ENCODE measurements at regions of chr11 and their contacts with region 1.

Region 1: DNA sequence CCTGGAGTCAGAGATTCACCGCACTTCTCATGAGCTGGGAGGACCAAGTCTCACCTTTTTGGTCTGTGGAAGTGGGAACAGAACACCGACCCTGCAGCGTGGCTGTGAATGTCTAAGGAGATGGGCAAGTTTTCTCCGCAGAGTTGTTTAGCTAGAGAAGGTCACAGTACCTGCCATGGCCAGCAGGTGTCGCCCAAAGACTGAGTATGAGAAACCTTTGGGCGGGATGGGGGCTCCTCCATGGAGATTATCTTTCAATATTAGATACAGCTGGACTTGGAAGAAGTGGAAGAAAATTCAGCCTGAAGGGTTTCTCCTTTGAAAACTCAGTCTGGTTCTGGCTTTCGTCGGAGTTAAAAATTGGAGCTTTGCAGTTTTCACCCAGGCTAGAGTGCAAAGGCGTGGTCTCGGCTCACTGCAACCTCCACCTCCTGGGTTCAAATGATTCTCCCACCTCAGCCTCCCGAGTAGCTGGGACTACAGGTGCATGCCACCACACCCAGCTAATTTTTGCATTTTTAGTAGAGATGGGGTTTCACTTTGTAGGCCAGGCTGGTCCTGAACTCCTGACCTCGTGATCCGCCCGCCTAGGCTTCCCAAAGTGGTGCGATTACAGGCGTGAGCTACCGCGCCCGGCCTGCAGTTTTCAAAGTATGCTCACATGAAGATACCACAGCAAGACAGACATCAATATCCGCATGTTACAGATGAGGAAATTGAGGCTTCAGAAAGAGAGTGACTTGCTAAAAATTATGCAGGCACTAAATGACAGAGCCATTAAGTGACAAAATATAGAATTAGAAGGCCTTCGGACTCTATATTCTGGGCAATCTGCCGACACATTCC is 10.7 kb upstream of the DSCAML1 start:
- DNase-seq: peak; percentile 79
- H3K4me3 ChIP-seq: no peak overlapping the region; a peak in 1 of 4 replicates
- H3K27ac ChIP-seq: no peak overlapping the region
- H3K4me1 ChIP-seq: peaks cover 0 to 5% of the 10 kb centered on the region in 2 experiments; a peak in 1 of 4 replicates
- H3K27me3 ChIP-seq: peaks cover 12% of the 10 kb centered on the region; the same call in 1 of the 2 replicates
- CTCF ChIP-seq: peak; percentile 92
- EP300 ChIP-seq: no peak
- RAD21 ChIP-seq: peak; percentile 84

Region 2: DNA sequence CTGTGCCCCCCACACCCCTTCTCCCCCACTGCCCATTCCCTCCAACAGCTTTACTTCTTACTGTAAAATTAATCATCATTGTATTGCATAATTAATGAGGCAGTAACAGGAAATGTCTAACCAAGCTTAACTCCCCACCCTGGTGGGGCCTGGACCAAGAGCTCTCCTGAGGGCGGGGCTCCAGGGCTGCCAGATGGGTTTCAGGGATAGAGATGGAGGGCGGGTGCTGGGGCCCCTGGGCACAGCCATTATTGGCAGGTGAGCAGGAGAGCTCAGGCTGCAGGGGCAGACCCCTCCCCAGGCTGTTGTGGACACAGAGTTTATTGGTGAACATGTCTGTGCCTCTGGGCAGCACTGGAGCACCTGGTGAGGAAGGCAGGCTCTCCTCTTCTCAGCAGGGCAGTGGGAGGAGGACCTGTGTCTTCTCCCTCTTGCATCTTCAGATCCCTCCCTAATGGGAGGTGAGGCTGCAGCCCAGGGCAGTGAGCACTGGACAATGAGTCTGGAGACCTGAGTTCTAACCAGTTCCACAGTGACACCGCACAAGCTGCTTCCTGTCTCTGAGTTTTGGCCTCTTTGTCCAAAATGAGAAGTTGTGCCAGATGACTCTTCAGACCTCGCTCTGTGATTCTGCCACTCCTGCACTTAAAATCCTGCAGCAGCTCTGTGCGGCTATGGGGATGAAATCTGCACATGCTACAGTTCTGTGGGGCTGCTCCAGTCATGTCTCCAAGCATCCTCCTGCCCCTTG is 246.8 kb before region 1 on chr11:
- CTCF ChIA-PET with region 1: interaction called, 14 read pairs
- POLR2A ChIA-PET with region 1: no interaction called
- DNase-seq: no peak
- H3K4me3 ChIP-seq: no peak overlapping the region
- H3K27ac ChIP-seq: no peak overlapping the region
- H3K4me1 ChIP-seq: peaks cover 0 to 19% of the 10 kb centered on the region in 2 experiments; a peak in 2 of 4 replicates
- H3K27me3 ChIP-seq: peaks cover 8% of the 10 kb centered on the region; the same call in 1 of the 2 replicates
- CTCF ChIP-seq: no peak
- EP300 ChIP-seq: no peak
- RAD21 ChIP-seq: no peak

Region 3: DNA sequence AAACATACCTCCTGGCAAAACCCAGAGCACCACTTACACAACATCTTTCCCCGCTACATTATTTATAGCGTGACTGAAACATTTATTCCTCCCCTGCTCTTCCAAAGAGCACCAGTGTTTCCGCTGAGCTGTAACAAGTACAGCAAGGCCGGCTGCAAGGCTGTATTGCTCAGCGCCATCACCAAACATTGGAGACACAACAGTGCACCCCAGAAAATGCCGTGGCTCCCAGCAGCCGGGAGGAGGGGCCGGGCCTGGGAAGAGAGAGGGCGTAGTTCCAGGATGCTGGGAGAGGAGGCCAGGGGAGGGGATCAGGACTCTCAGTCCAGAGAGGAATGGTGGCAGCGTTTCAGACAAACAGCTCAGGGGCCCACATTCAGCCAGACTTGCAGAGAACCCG is 143.9 kb before region 1 on chr11:
- CTCF ChIA-PET with region 1: interaction called, 10 read pairs
- POLR2A ChIA-PET with region 1: no interaction called
- DNase-seq: no peak
- H3K4me3 ChIP-seq: no peak overlapping the region
- H3K27ac ChIP-seq: no peak overlapping the region
- H3K4me1 ChIP-seq: peaks cover 0 to 32% of the 10 kb centered on the region in 2 experiments; a peak in 2 of 4 replicates
- H3K27me3 ChIP-seq: peaks cover 6% of the 10 kb centered on the region; the same call in 1 of the 2 replicates
- CTCF ChIP-seq: no peak
- EP300 ChIP-seq: no peak
- RAD21 ChIP-seq: no peak

Region 4: DNA sequence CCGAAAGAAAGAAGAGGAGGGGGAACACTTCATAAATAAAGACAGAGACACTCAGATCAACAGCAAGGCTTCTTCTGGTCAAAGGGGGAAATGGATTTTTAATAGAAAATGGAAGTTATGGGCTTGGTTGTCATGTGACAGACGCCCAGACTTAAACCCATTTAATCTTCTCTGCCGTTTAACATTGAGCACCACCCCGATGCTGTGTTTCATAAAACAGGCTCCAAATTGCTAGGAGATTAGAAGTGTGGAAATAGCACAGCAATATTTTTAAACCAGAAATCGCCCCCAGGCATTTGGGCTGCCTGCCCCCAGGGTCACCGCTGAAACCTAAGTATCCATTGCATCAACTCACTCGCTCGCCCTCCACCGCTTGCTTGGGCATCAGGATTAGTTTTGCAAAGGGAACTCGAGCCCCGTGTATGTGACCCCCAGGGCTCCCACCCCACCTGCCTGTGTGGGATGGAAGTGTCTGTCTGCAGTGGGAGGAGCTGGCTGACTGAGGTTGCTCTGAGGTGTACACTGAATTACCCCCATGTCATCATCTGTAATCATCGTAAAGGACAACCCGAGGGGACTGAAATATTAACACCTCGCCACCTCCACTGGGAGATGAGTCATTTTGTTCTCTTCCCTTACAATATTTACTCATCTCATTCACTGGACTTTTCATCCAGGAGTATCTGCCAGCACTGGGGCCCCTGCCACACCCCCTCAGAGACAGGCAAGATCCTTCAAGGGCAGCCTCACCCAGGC is 21.4 kb before region 1 on chr11:
- CTCF ChIA-PET with region 1: interaction called, 88 read pairs
- POLR2A ChIA-PET with region 1: no interaction called
- DNase-seq: no peak
- H3K4me3 ChIP-seq: no peak overlapping the region
- H3K27ac ChIP-seq: no peak overlapping the region
- H3K4me1 ChIP-seq: peaks cover 0 to 11% of the 10 kb centered on the region in 2 experiments; a peak in 2 of 4 replicates
- H3K27me3 ChIP-seq: peaks cover 17% of the 10 kb centered on the region; the same call in 1 of the 2 replicates
- CTCF ChIP-seq: no peak
- EP300 ChIP-seq: no peak
- RAD21 ChIP-seq: no peak

Region 5: GRCh38 chr11:118051611-118052461 is 244.1 kb after region 1 on chr11:
- CTCF ChIA-PET with region 1: interaction called, 29 read pairs
- POLR2A ChIA-PET with region 1: no interaction called
- DNase-seq: no peak
- H3K4me3 ChIP-seq: no peak overlapping the region
- H3K27ac ChIP-seq: no peak overlapping the region
- H3K4me1 ChIP-seq: no peaks in the 10 kb centered on the region
- H3K27me3 ChIP-seq: peaks cover 8% of the 10 kb centered on the region; the same call in 1 of the 2 replicates
- CTCF ChIP-seq: no peak
- EP300 ChIP-seq: no peak
- RAD21 ChIP-seq: no peak

Measured in SK-N-SH (cell line).